Ascending aorta (tissue), 2 donors: ENCODE measurements at regions of chr13 and their contacts with region 1.

Region 1: DNA sequence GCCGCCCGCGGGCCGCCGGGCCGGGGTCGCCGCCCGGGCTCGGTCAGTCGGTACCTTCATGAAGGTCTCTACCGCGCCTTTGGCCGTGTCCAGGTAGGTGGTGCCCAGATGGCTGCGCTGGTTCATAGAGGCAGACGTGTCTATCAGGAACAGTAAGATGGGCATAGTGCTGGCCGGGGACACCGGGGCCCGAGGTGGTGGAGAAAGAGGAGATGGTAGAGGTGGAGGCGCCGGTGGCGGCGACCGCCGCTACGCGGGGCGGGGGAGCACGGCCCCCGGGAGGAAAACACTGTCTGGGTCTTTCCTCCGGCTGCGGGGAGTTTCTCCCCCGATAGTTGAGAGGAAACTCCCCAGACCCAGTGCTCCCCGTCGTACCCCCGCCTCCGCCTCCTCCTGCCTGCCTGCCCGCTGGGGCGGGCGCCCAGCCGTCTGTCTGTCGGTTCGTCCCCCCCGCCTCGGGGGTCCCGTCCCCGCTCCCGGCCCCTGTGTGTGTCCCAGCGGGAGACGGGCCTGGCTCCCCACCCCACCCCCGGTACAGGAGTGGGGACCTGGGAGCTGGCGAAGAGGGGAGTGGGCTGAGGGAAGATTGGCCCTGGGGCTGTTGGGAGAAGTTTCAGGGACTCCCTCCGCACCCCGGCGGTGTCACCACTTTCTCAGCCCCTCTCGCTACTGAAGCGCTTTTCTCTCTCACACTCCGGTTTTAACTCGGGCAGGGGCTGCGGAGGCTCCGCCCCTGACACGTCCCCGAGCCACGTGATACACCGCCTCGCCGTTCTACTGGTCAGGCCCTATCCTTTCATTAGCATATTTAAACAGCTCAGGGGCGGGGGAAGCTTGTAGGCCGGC is at the start of gene INTS6:
- DNase-seq: peak; percentile 98 to 100
- H3K4me3 ChIP-seq: peak within 1 kb of the TSS; percentile 94 to 98
- H3K27ac ChIP-seq: peak within 1 kb of the TSS; percentile 97 to 100
- H3K4me1 ChIP-seq: peaks cover 0 to 18% of the 10 kb centered on the region in 2 donors
- H3K27me3 ChIP-seq: no peaks in the 10 kb centered on the region
- CTCF ChIP-seq: no peak
- total RNA-seq, gene INTS6: 43.5 TPM

Region 2: GRCh38 chr13:49936085-49936940 is 1516.3 kb before region 1 on chr13 and contains the start of gene SPRYD7:
- intact Hi-C with region 1: loop called (anchors 5 kb)
- DNase-seq: peak; percentile 92 to 99
- H3K4me3 ChIP-seq: peak within 1 kb of the TSS; percentile 78 to 97
- H3K27ac ChIP-seq: peak within 1 kb of the TSS; percentile 78 to 93
- H3K4me1 ChIP-seq: peaks cover 0 to 17% of the 10 kb centered on the region in 2 donors
- H3K27me3 ChIP-seq: no peaks in the 10 kb centered on the region
- CTCF ChIP-seq: peak; percentile 89 to 97 (median 94)
- total RNA-seq, gene SPRYD7: 1.7 TPM

Region 3: GRCh38 chr13:51222037-51222685 is 230.4 kb before region 1 on chr13 and contains the start of gene FAM124A:
- intact Hi-C with region 1: loop called (anchors 10 kb)
- DNase-seq: peak in 1 of 2 donors; percentile 67
- H3K4me3 ChIP-seq: peak within 1 kb of the TSS; percentile 82 to 92
- H3K27ac ChIP-seq: peak within 1 kb of the TSS in 1 of 2 donors; percentile 12
- H3K4me1 ChIP-seq: no peaks in the 10 kb centered on the region
- H3K27me3 ChIP-seq: no peaks in the 10 kb centered on the region
- CTCF ChIP-seq: peak in 1 of 3 experiments; percentile 60
- total RNA-seq, gene FAM124A: 22.4 TPM

Region 4: GRCh38 chr13:51583875-51584730 is 131.5 kb after region 1 on chr13 and contains the start of gene WDFY2:
- intact Hi-C with region 1: loop called (anchors 1 kb)
- DNase-seq: peak; percentile 99 to 100
- H3K4me3 ChIP-seq: peak within 1 kb of the TSS; percentile 79 to 90
- H3K27ac ChIP-seq: peak within 1 kb of the TSS; percentile 84 to 89
- H3K4me1 ChIP-seq: peaks cover 0 to 8% of the 10 kb centered on the region in 2 donors
- H3K27me3 ChIP-seq: no peaks in the 10 kb centered on the region
- CTCF ChIP-seq: peak in 1 of 3 experiments; percentile 6
- total RNA-seq, gene WDFY2: 6.1 TPM

Region 5: GRCh38 chr13:51803422-51804294 is 351.1 kb after region 1 on chr13 and contains the start of gene DHRS12:
- intact Hi-C with region 1: loop called (anchors 1 kb)
- DNase-seq: peak; percentile 67 to 96
- H3K4me3 ChIP-seq: peak within 1 kb of the TSS; percentile 79 to 98
- H3K27ac ChIP-seq: peak within 1 kb of the TSS; percentile 98
- H3K4me1 ChIP-seq: peaks cover 12 to 40% of the 10 kb centered on the region in 2 donors
- H3K27me3 ChIP-seq: no peaks in the 10 kb centered on the region
- CTCF ChIP-seq: no peak
- total RNA-seq, gene DHRS12: 7.9 TPM

Region 6: DNA sequence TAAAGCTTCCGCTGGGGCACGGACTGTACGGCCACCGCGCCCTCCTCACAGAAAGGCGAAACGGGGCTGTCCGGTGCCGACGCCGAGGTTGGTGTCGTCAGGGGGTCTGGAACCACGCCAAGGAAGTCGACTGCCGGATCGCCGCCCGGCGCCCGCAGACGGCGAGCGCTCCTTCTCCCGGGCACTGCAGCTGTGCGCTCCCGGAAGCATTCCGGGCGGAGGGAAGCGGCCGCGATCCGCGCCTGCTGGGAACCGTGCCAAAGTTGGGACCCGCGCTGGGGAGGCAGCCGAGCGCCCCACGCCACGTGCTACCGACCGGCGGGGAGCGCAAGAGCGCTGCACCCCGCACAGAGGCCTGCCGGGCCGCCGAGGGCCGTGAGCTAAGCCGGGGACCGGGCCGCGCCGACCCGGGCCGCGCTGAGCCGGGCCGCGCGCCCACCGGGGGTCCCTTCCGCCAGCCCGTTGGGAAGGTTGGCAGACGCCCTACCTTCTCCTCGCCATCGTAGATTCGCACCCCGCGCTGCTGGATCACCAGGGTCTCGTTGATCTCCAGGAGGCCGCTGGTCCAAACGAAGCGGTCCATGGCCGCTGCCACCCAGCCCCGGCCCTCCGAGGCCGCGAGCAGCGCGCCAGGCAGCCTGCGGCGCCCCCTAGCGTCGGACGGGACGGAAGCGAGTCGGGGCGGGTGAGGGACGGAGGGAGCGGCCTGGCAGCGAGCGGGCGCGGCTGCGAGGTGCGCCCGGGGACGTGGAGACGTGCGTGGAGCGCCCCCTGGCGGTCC is 997.6 kb after region 1 on chr13 and contains the start of gene VPS36:
- intact Hi-C with region 1: loop called (anchors 5 kb)
- DNase-seq: peak; percentile 66 to 98
- H3K4me3 ChIP-seq: peak within 1 kb of the TSS; percentile 77 to 88
- H3K27ac ChIP-seq: peak within 1 kb of the TSS; percentile 85 to 88
- H3K4me1 ChIP-seq: peaks cover 0 to 5% of the 10 kb centered on the region in 2 donors
- H3K27me3 ChIP-seq: no peaks in the 10 kb centered on the region
- CTCF ChIP-seq: peak; percentile 97 to 99 (median 98)
- total RNA-seq, gene VPS36: 69.3 TPM